ENCODE measurements at regions of chr2 and their contacts with region 1.

Region 1: GRCh38 chr2:161434118-161434517 is 18.0 kb downstream of the TBR1 start:
- DNase-seq: no peak
- H3K4me3 Mint-ChIP-seq: no peak overlapping the region
- H3K27ac Mint-ChIP-seq: no peak overlapping the region
- H3K4me1 Mint-ChIP-seq: no peaks in the 10 kb centered on the region
- H3K27me3 Mint-ChIP-seq: peaks cover 46% of the 10 kb centered on the region

Region 2: GRCh38 chr2:161522796-161523195 is 88.7 kb after region 1 on chr2:
- CTCF ChIA-PET with region 1: no interaction called
- intact Hi-C with region 1: loop called (anchors 5 kb)
- DNase-seq: no peak
- H3K4me3 Mint-ChIP-seq: no peak overlapping the region
- H3K27ac Mint-ChIP-seq: no peak overlapping the region
- H3K4me1 Mint-ChIP-seq: no peaks in the 10 kb centered on the region
- H3K27me3 Mint-ChIP-seq: peaks cover 2% of the 10 kb centered on the region